SK-N-SH (cell line): ENCODE measurements at regions of chr7 and their contacts with region 1.

Region 1: GRCh38 chr7:70775570-70776156 is 356.3 kb upstream of the GALNT17 start:
- DNase-seq: no peak
- H3K4me3 ChIP-seq: no peak overlapping the region
- H3K27ac ChIP-seq: 0 out of 4 replicates have a peak overlapping the region, but pooled peaks of 1 of the 2 experiments have one; percentile 18
- H3K4me1 ChIP-seq: peaks cover 0 to 17% of the 10 kb centered on the region in 2 experiments; a peak in 2 of 4 replicates
- H3K27me3 ChIP-seq: no peaks in the 10 kb centered on the region
- CTCF ChIP-seq: peak; percentile 51
- EP300 ChIP-seq: peak in 1 of 2 experiments; percentile 81; a peak in 2 of 4 replicates
- RAD21 ChIP-seq: peak; percentile 59

Region 2: DNA sequence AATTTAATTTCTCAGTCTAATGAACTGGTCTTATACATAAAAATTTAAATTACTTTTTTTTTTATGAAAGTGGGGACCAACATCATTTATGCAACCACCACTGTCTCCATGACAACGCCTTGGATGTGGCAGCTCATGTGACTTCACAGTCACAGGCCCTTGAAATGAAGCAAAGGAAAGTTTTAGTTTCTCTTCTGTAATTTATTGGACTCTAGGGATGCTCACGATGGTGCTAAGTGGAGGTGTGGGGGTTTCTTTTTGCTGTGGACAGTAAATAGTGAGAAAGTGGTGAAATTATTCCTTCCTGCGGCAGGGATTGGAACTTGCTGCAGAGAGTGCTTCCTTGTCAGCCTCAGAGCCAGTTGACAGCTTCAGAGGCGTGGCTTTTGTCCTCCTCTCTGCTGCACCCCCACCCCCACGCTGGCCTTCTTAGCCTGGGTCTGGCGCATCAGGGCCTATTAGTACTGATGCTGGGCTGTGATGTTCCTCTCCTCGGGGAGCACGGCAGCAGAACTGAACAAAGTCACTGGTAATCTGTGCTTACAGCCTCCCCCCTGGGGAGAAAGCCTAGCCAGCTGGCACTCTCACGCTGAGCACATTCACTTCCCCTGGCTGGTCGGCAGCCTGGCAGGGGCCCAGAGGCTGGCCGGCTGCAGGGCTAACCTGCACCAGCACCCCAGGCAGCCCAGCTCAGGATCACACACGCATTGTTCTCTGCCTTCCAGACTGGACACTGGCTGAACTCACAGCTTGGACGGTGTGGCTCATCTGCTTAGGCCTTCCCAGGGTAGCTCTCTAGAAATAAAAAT is 161.2 kb before region 1 on chr7:
- CTCF ChIA-PET with region 1: no interaction called
- POLR2A ChIA-PET with region 1: no interaction called
- DNase-seq: peak; percentile 91
- H3K4me3 ChIP-seq: peak overlapping the region; percentile 20 to 24; a peak in 3 of 4 replicates
- H3K27ac ChIP-seq: peak overlapping the region; percentile 54 to 91
- H3K4me1 ChIP-seq: peaks cover 0 to 40% of the 10 kb centered on the region in 2 experiments; a peak in 3 of 4 replicates
- H3K27me3 ChIP-seq: no peaks in the 10 kb centered on the region
- CTCF ChIP-seq: no peak
- EP300 ChIP-seq: peak; percentile 71 to 75; a peak in 3 of 4 replicates
- RAD21 ChIP-seq: peak; percentile 18

Region 3: GRCh38 chr7:70788276-70788675 is 12.6 kb after region 1 on chr7:
- CTCF ChIA-PET with region 1: interaction called, 16 read pairs
- POLR2A ChIA-PET with region 1: no interaction called
- DNase-seq: peak; percentile 59
- H3K4me3 ChIP-seq: no peak overlapping the region
- H3K27ac ChIP-seq: no peak overlapping the region
- H3K4me1 ChIP-seq: no peaks in the 10 kb centered on the region
- H3K27me3 ChIP-seq: no peaks in the 10 kb centered on the region
- CTCF ChIP-seq: no peak; the same call in 1 of the 2 replicates
- EP300 ChIP-seq: no peak
- RAD21 ChIP-seq: no peak

Region 4: DNA sequence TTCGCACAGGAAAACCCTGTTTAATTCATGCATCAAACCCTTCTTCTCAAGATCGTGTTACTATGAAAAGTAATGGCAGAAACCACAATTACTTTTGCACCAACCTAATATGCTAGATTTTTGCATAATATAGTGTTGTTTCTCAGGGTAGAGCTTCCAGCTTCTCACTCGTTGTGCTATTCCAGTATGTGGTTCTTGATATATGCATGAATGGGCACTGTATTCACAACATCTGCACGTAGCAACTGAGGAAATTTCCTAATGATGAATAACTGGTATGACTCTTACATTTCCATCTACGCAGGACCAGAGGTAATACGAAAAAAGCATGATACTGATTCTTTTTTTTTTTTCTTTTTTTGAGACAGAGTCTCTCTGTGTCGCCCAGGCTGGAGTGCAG is 29.7 kb after region 1 on chr7:
- CTCF ChIA-PET with region 1: no interaction called
- POLR2A ChIA-PET with region 1: no interaction called
- DNase-seq: no peak
- H3K4me3 ChIP-seq: no peak overlapping the region
- H3K27ac ChIP-seq: no peak overlapping the region
- H3K4me1 ChIP-seq: no peaks in the 10 kb centered on the region
- H3K27me3 ChIP-seq: 0 out of 2 replicates have a peak, but pooled peaks cover 3% of the 10 kb centered on the region
- CTCF ChIP-seq: no peak
- EP300 ChIP-seq: no peak
- RAD21 ChIP-seq: no peak